ENCODE measurements at regions of chr4 and their contacts with region 1.

Region 1: GRCh38 chr4:146916479-146917076 is 29.1 kb downstream of the TTC29 start:
- DNase-seq: peak; percentile 3
- H3K4me3 ChIP-seq: no peak overlapping the region
- H3K27ac ChIP-seq: no peak overlapping the region
- H3K4me1 ChIP-seq: no peaks in the 10 kb centered on the region
- H3K27me3 ChIP-seq: peaks cover 1% of the 10 kb centered on the region
- CTCF ChIP-seq: peak; percentile 70 to 76

Region 2: GRCh38 chr4:145234091-145234706 is 1682.4 kb before region 1 on chr4:
- CTCF ChIA-PET with region 1: no interaction called
- dilution Hi-C with region 1: no loop called
- in situ Hi-C with region 1: no loop called
- intact Hi-C with region 1: loop called (anchors 5 kb)
- DNase-seq: peak; percentile 43
- H3K4me3 ChIP-seq: no peak overlapping the region
- H3K27ac ChIP-seq: no peak overlapping the region
- H3K4me1 ChIP-seq: no peaks in the 10 kb centered on the region
- H3K27me3 ChIP-seq: no peaks in the 10 kb centered on the region
- CTCF ChIP-seq: peak; percentile 94 to 95

Region 3: GRCh38 chr4:145936142-145936996 is 980.2 kb before region 1 on chr4:
- CTCF ChIA-PET with region 1: no interaction called
- dilution Hi-C with region 1: no loop called
- in situ Hi-C with region 1: no loop called
- intact Hi-C with region 1: loop called (anchors 10 kb)
- DNase-seq: peak; percentile 67
- H3K4me3 ChIP-seq: peak overlapping the region; percentile 84 to 91 (median 85)
- H3K27ac ChIP-seq: peak overlapping the region; percentile 74
- H3K4me1 ChIP-seq: peaks cover 20% of the 10 kb centered on the region
- H3K27me3 ChIP-seq: no peaks in the 10 kb centered on the region
- CTCF ChIP-seq: peak in 1 of 2 donors; percentile 40

Region 4: GRCh38 chr4:146333187-146333894 is 583.2 kb before region 1 on chr4:
- CTCF ChIA-PET with region 1: no interaction called
- dilution Hi-C with region 1: no loop called
- in situ Hi-C with region 1: loop called (anchors 10 kb)
- intact Hi-C with region 1: no loop called
- DNase-seq: peak; percentile 62
- H3K4me3 ChIP-seq: no peak overlapping the region
- H3K27ac ChIP-seq: no peak overlapping the region
- H3K4me1 ChIP-seq: peaks cover 52% of the 10 kb centered on the region
- H3K27me3 ChIP-seq: no peaks in the 10 kb centered on the region
- CTCF ChIP-seq: no peak

Region 5: GRCh38 chr4:146545102-146545501 is 371.5 kb before region 1 on chr4:
- CTCF ChIA-PET with region 1: no interaction called
- dilution Hi-C with region 1: no loop called
- in situ Hi-C with region 1: no loop called
- intact Hi-C with region 1: loop called (anchors 2 kb)
- DNase-seq: peak; percentile 18
- H3K4me3 ChIP-seq: no peak overlapping the region
- H3K27ac ChIP-seq: no peak overlapping the region
- H3K4me1 ChIP-seq: no peaks in the 10 kb centered on the region
- H3K27me3 ChIP-seq: no peaks in the 10 kb centered on the region
- CTCF ChIP-seq: peak; percentile 50 to 56

Region 6: DNA sequence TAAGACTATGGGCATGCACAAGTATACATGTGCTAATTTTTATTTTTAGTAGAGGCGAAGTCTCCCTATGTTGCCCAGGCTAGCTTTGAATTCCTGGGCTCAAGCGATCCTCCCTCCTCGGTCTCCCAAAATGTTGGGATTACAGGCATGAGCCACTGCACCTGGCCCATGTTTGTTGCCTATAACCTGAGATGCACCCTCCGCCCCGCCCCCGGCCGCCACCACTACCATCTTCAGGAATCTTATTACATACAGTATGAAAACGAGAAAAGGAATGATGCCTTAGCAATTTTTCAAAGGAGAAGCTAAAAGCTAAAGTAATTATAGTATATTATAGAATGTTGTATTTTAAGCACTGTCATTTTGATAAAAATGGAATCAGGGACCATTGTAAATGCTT is 216.7 kb before region 1 on chr4:
- CTCF ChIA-PET with region 1: no interaction called
- dilution Hi-C with region 1: no loop called
- in situ Hi-C with region 1: no loop called
- intact Hi-C with region 1: no loop called
- DNase-seq: no peak
- H3K4me3 ChIP-seq: no peak overlapping the region
- H3K27ac ChIP-seq: no peak overlapping the region
- H3K4me1 ChIP-seq: no peaks in the 10 kb centered on the region
- H3K27me3 ChIP-seq: peaks cover 5% of the 10 kb centered on the region
- CTCF ChIP-seq: no peak

Region 7: GRCh38 chr4:146998157-146998556 is 81.6 kb after region 1 on chr4:
- CTCF ChIA-PET with region 1: no interaction called
- dilution Hi-C with region 1: no loop called
- in situ Hi-C with region 1: no loop called
- intact Hi-C with region 1: no loop called
- DNase-seq: peak; percentile 12
- H3K4me3 ChIP-seq: no peak overlapping the region
- H3K27ac ChIP-seq: no peak overlapping the region
- H3K4me1 ChIP-seq: no peaks in the 10 kb centered on the region
- H3K27me3 ChIP-seq: no peaks in the 10 kb centered on the region
- CTCF ChIP-seq: no peak

Region 8: GRCh38 chr4:147096667-147097604 is 180.4 kb after region 1 on chr4:
- CTCF ChIA-PET with region 1: no interaction called
- dilution Hi-C with region 1: no loop called
- in situ Hi-C with region 1: no loop called
- intact Hi-C with region 1: loop called (anchors 5 kb)
- DNase-seq: peak; percentile 31
- H3K4me3 ChIP-seq: no peak overlapping the region
- H3K27ac ChIP-seq: no peak overlapping the region
- H3K4me1 ChIP-seq: peaks cover 2% of the 10 kb centered on the region
- H3K27me3 ChIP-seq: no peaks in the 10 kb centered on the region
- CTCF ChIP-seq: peak; percentile 58 to 59

Region 9: DNA sequence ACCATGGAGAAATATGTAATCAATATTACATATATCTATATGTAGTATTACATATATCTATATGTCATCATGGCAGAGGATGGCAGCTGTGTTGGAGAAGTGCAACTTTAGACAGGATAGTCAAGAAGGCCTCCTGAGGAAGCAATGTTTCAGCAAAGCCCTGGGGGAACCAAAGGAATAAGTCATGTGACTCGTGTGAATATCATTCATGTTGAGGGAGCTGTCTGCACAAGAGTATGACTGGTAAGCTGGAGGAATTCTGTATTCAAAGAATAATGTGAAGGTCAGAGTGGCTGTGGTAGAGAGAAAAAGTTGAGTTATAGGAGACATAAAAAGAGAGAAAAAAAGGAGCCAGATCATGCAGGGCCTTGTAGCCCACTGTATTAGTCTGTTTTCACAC is 471.4 kb after region 1 on chr4:
- CTCF ChIA-PET with region 1: no interaction called
- dilution Hi-C with region 1: no loop called
- in situ Hi-C with region 1: no loop called
- intact Hi-C with region 1: no loop called
- DNase-seq: peak; percentile 57
- H3K4me3 ChIP-seq: no peak overlapping the region
- H3K27ac ChIP-seq: no peak overlapping the region
- H3K4me1 ChIP-seq: peaks cover 10% of the 10 kb centered on the region
- H3K27me3 ChIP-seq: no peaks in the 10 kb centered on the region
- CTCF ChIP-seq: no peak

Measured in mammary epithelial cell (primary cell).